ENCODE measurements at regions of chr5 and their contacts with region 1.

Region 1: GRCh38 chr5:154940772-154941620 is at the start of gene MRPL22:
- DNase-seq: peak; percentile 82 to 98 (median 90)

Region 2: GRCh38 chr5:154857530-154858296 is 83.3 kb before region 1 on chr5:
- intact Hi-C with region 1: loop called (anchors 5 kb)
- DNase-seq: peak; percentile 86 to 99 (median 94)

Region 3: GRCh38 chr5:155136216-155136850 is 195.3 kb after region 1 on chr5:
- intact Hi-C with region 1: loop called (anchors 5 kb)
- DNase-seq: no peak

Region 4: DNA sequence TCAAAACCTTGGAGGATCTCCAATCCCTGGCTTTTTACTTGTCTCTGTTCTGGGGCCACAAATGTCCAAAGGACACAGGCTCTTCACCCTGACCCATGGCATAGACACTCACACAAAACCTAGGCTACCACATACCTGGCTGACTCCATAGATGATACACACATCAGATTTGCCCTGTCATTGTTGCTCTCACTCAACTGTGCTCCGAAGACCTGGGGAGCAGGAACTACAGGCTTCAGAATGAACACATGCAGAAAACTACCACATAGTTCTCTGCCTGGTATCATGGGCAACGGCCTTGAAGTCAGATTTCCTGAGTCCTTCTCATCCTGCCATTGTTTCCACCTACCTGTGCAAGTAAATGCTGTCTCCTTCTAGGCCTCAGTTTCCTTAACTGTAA is 298.8 kb after region 1 on chr5:
- intact Hi-C with region 1: no loop called
- DNase-seq: no peak